Right ventricle myocardium superior (tissue), 1 donor: ENCODE measurements at regions of chr6 and their contacts with region 1.

Region 1: GRCh38 chr6:158704181-158704822 is 54.4 kb downstream of the SYTL3 start:
- DNase-seq: peak; percentile 92
- ATAC-seq: peak; percentile 85

Region 2: DNA sequence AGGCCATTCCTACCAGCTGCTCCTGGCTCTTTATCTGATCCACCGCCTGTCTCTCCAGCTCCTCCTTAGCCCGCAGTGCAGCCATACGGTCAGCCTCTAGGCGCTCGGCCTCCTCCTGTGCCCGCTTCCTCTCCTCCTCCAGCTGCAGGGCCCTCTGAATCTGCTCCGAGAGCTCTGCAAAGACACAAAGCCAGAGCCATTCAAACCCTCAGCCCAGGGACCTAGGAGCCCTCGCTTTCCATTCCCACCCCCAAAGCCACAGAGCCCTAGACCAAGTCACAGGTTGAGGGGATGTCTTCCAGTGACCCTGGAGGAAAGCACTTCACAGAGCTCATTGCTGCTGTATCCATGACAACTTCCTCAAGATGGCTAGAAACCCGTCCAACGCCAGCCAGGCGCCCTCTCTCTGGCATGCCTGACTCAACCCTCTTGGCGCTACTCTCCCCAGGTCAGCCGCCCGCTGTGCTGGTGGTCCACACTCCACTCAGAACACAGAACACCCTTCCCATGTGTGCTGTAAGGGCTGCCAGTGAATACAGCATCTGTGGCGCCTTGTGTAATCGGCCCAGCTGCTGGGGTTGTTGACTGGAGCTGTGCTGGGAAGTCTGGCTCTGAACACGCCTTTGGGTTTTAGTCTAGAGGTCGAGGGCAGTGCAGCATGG is 65.6 kb after region 1 on chr6:
- intact Hi-C with region 1: loop called (anchors 10 kb)
- DNase-seq: peak; percentile 69
- ATAC-seq: peak; percentile 53

Region 3: GRCh38 chr6:158785036-158785435 is 80.7 kb after region 1 on chr6:
- intact Hi-C with region 1: no loop called
- DNase-seq: no peak
- ATAC-seq: no peak

Region 4: GRCh38 chr6:158819213-158819909 is 115.1 kb after region 1 on chr6 and contains the start of gene EZR:
- intact Hi-C with region 1: loop called (anchors 10 kb)
- DNase-seq: peak; percentile 89
- ATAC-seq: peak; percentile 75
- total RNA-seq, gene EZR: 197 TPM

Region 5: DNA sequence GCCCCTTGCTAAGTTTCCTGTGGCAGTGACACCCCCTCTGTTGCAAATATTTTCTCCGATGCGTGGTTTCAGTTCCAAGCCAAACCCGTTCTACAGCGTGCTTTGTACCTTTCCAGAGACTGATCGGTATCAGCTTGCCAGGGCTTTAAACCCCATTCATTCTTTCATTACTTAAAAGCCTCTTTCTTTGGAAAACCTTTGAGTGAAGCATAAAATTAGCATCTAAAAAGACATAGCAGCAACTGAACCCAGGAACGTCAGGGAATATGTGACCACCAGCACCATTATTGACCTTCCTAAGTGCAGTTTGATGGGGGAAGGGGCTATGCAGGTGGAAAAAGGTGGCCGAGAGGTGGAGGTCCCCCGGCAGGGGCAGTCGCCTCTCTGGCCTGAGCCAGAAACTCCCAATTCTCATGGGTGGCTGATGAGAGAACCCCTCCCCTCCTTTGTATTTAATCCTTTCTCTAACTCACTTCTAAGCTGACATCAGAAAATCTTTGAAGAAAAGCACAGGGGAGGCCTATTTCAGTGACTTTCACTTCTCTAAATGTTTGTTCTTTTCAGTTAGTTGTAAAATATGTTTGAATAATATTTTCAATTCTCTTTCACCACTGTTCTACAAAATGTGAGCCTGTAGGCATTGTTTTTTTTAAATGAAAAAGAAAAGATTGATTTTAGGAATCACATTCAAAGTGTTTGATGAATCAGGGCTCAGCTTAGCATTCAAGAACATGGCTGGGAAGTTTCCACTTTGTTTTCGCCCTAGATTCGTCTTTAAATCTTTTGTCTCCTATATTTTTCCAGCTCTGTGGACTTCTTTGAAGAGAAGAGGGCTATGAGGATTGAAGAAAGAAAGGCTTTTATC is 206.4 kb after region 1 on chr6:
- intact Hi-C with region 1: no loop called
- DNase-seq: no peak
- ATAC-seq: no peak

Region 6: DNA sequence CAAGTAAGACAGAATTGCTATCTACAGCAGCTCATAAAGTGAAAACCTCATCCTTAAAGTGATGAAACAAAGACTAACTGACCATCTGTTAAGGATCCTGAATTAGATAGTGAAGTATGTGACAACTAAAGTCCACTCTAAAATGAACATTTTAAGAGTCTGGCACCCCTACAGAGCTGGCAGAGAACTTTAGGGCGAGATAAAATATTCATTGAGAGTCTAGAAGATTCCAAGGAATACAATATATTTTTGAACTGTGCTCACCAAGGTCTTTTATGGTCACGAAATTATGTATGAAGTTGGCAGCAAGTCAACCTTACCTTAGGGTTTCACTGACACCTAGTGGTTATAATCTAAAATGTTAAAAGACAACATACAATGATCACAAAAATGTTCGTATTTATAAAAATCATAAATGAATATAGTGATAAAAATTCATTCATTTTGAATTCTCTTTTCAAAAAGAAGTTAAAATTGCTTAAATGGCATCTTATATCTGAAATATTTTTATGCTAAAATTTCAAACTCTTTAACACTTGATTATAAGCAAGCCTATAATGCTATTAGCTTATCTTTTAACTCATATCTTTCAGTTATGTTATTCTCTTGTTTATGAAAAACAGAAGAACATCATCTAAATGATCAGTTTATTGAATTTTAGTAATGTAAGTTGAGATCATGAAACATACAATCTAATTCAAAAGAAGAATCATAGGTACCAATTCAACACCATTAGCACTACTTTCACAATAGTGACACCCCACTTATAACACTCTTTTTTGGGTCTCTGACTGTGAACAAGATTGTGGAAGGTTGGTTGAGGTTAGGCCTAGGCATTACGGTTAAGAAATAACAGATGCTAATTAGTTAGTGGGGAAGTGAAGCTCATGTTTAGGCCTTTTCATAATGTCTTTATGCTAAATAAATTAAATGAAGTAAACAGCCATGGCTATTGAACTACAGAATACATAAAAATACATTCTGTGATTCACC is 268.2 kb after region 1 on chr6:
- intact Hi-C with region 1: loop called (anchors 5 kb)
- DNase-seq: no peak
- ATAC-seq: peak; percentile 72